ENCODE measurements at regions of chr18 and their contacts with region 1.

Region 1: GRCh38 chr18:54209471-54210180 is 14.8 kb downstream of the MBD2 start:
- DNase-seq: peak; percentile 61
- ATAC-seq: peak; percentile 83
- H3K4me3 ChIP-seq: peak overlapping the region; percentile 64
- H3K27ac ChIP-seq: peak overlapping the region; percentile 98
- H3K4me1 ChIP-seq: peaks cover 32% of the 10 kb centered on the region
- H3K27me3 ChIP-seq: no peaks in the 10 kb centered on the region
- CTCF ChIP-seq: no peak
- EP300 ChIP-seq: peak; percentile 94 to 97
- POLR2A ChIP-seq: no peak
- RAD21 ChIP-seq: no peak

Region 2: GRCh38 chr18:54127759-54128378 is 81.8 kb before region 1 on chr18:
- CTCF ChIA-PET with region 1: interaction called, 11 read pairs
- POLR2A ChIA-PET with region 1: no interaction called
- RAD21 ChIA-PET with region 1: interaction called, 3 read pairs
- SMC1A ChIA-PET with region 1: interaction called, 3 read pairs
- in situ Hi-C with region 1: no loop called
- intact Hi-C with region 1: no loop called
- DNase-seq: no peak
- ATAC-seq: peak; percentile 90
- H3K4me3 ChIP-seq: no peak overlapping the region
- H3K27ac ChIP-seq: no peak overlapping the region
- H3K4me1 ChIP-seq: peaks cover 3% of the 10 kb centered on the region
- H3K27me3 ChIP-seq: no peaks in the 10 kb centered on the region
- CTCF ChIP-seq: peak; percentile 54 to 65 (median 57); a peak in 5 of 6 replicates
- EP300 ChIP-seq: no peak
- POLR2A ChIP-seq: no peak
- RAD21 ChIP-seq: peak; percentile 78

Region 3: GRCh38 chr18:54197747-54198411 is 11.7 kb before region 1 on chr18:
- CTCF ChIA-PET with region 1: interaction called, 4 read pairs
- POLR2A ChIA-PET with region 1: interaction called, 4 read pairs
- RAD21 ChIA-PET with region 1: interaction called, 5 read pairs
- SMC1A ChIA-PET with region 1: interaction called, 10 read pairs
- in situ Hi-C with region 1: no loop called
- intact Hi-C with region 1: no loop called
- DNase-seq: no peak
- ATAC-seq: no peak
- H3K4me3 ChIP-seq: no peak overlapping the region
- H3K27ac ChIP-seq: no peak overlapping the region
- H3K4me1 ChIP-seq: no peaks in the 10 kb centered on the region
- H3K27me3 ChIP-seq: no peaks in the 10 kb centered on the region
- CTCF ChIP-seq: no peak
- EP300 ChIP-seq: no peak
- POLR2A ChIP-seq: no peak
- RAD21 ChIP-seq: no peak

Region 4: DNA sequence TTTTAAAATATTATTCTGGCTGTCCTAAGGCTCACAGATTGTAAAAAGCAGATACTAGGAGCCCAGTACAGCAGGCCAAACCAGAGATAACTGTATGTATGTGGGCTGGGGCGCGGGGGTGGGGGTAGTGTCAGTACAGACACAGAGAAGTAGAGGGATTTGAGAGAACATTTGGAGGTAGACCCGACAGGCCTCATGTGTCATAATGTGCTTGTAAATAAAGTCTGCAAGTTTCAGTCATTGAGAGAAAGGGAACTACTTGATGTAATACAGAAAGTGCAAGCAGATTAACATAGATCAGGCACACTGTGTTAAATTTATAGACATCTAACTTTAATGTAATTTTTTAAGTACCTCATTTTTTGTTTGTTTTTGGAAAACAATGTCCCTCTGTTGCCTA is 52.3 kb after region 1 on chr18:
- CTCF ChIA-PET with region 1: interaction called, 8 read pairs
- POLR2A ChIA-PET with region 1: interaction called, 17 read pairs
- RAD21 ChIA-PET with region 1: interaction called, 20 read pairs
- SMC1A ChIA-PET with region 1: interaction called, 18 read pairs
- in situ Hi-C with region 1: no loop called
- intact Hi-C with region 1: loop called (anchors 1 kb)
- DNase-seq: peak; percentile 85
- ATAC-seq: peak; percentile 80
- H3K4me3 ChIP-seq: peak overlapping the region; percentile 44; the same call in 1 of the 2 replicates
- H3K27ac ChIP-seq: peak overlapping the region; percentile 94
- H3K4me1 ChIP-seq: peaks cover 49% of the 10 kb centered on the region
- H3K27me3 ChIP-seq: no peaks in the 10 kb centered on the region
- CTCF ChIP-seq: no peak
- EP300 ChIP-seq: peak; percentile 22 to 67; a peak in 2 of 4 replicates
- POLR2A ChIP-seq: no peak
- RAD21 ChIP-seq: 0 out of 2 replicates have a peak, but pooled peaks have one; percentile 11

Region 5: GRCh38 chr18:54378057-54378456 is 168.4 kb after region 1 on chr18:
- CTCF ChIA-PET with region 1: no interaction called
- POLR2A ChIA-PET with region 1: no interaction called
- RAD21 ChIA-PET with region 1: no interaction called
- SMC1A ChIA-PET with region 1: no interaction called
- in situ Hi-C with region 1: no loop called
- intact Hi-C with region 1: no loop called
- DNase-seq: no peak
- ATAC-seq: no peak
- H3K4me3 ChIP-seq: no peak overlapping the region
- H3K27ac ChIP-seq: no peak overlapping the region
- H3K4me1 ChIP-seq: no peaks in the 10 kb centered on the region
- H3K27me3 ChIP-seq: no peaks in the 10 kb centered on the region
- CTCF ChIP-seq: no peak
- EP300 ChIP-seq: no peak
- POLR2A ChIP-seq: no peak
- RAD21 ChIP-seq: no peak

Region 6: GRCh38 chr18:54873884-54874255 is 664.2 kb after region 1 on chr18:
- CTCF ChIA-PET with region 1: no interaction called
- POLR2A ChIA-PET with region 1: no interaction called
- RAD21 ChIA-PET with region 1: no interaction called
- SMC1A ChIA-PET with region 1: no interaction called
- in situ Hi-C with region 1: no loop called
- intact Hi-C with region 1: no loop called
- DNase-seq: no peak
- ATAC-seq: no peak
- H3K4me3 ChIP-seq: no peak overlapping the region
- H3K27ac ChIP-seq: no peak overlapping the region
- H3K4me1 ChIP-seq: no peaks in the 10 kb centered on the region
- H3K27me3 ChIP-seq: no peaks in the 10 kb centered on the region
- CTCF ChIP-seq: no peak
- EP300 ChIP-seq: no peak
- POLR2A ChIP-seq: no peak
- RAD21 ChIP-seq: no peak

Measured in GM12878 (cell line).